ENCODE measurements at regions of chr11 and their contacts with region 1.

Region 1: DNA sequence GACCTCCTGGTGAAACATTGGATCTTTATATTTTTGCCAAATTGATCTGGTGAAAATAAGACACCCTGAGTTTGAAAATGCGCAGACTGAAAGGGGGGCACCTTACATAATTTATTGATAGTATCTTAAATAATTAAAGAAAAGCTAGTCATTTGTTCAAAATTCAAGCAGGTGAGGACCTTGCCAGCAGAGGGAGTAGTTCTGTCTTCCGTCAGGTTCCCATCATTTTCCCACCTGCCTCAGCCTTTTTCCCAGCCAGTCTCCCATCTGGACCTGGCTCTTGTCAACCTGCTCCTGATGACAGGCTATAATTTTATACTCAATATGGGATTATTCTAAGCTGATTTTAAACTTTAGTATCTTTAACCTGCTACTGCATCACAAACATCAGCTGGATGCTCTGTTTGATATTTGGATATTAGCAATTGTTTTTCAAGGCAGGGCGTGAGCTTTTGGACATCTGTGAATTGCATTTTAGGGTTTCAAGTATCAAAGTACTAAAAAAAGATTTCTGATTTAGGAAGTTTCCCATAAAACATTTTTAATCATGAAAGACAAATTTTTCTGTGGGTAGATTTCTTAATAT is 132.0 kb downstream of the ELP4 start:
- DNase-seq: no peak
- H3K4me3 ChIP-seq: no peak overlapping the region
- H3K27ac ChIP-seq: no peak overlapping the region
- H3K27me3 ChIP-seq: no peaks in the 10 kb centered on the region
- CTCF ChIP-seq: peak; percentile 72

Region 2: DNA sequence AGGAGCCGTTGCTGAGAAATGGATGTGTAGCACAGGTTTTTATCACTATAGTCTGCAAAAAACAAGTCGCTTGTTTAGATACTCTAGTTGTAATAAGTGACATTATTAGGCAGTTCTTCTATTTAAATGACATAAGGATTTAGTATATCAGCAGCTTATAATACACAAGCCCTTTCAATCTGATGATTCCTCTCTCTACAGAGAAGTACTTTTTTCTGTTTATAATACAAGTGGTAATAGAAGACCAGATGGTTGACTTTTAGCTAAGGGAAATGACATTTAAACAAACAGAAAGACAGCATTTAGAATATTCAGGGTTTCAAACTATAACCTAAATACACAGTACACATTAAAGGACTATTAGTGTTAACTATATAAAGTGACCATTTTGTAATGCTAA is 192.5 kb before region 1 on chr11:
- CTCF ChIA-PET with region 1: no interaction called
- POLR2A ChIA-PET with region 1: no interaction called
- DNase-seq: no peak
- H3K4me3 ChIP-seq: no peak overlapping the region
- H3K27ac ChIP-seq: no peak overlapping the region
- H3K27me3 ChIP-seq: no peaks in the 10 kb centered on the region
- CTCF ChIP-seq: no peak

Region 3: DNA sequence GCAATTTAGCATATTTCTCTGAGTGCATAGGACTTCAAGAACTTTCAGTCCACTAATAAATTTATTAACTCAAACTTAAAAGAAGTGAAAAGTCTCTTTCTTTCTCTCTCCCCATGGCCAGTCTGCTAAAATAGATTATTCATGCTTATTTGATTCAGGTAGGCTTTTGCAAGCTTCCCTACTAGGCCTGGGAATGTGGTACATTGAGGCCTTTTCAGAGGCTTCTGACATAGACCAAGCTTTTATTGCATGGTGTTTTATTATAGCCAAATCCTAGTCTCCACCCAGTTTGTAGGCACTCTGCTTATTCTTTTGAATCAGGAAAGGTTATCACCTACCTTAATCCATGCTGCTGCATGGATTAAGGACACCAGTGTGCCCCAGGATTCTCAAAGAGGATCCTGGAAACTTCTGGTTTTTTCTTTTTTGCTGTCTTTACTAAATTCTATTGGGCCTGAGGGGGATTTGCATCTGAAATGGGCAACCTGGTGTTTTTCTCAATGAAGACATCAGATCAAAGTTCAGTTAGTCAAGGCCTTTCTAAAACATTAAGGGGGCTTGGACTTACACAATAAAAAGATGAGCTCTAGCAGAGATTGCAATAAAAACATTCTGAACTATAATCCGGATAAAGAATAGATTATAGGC is 39.8 kb before region 1 on chr11:
- CTCF ChIA-PET with region 1: interaction called, 10 read pairs
- POLR2A ChIA-PET with region 1: no interaction called
- DNase-seq: no peak
- H3K4me3 ChIP-seq: no peak overlapping the region
- H3K27ac ChIP-seq: no peak overlapping the region
- H3K27me3 ChIP-seq: no peaks in the 10 kb centered on the region
- CTCF ChIP-seq: no peak

Region 4: GRCh38 chr11:31628111-31628510 is 13.5 kb before region 1 on chr11:
- CTCF ChIA-PET with region 1: interaction called, 18 read pairs
- POLR2A ChIA-PET with region 1: no interaction called
- DNase-seq: no peak
- H3K4me3 ChIP-seq: no peak overlapping the region
- H3K27ac ChIP-seq: no peak overlapping the region
- H3K27me3 ChIP-seq: no peaks in the 10 kb centered on the region
- CTCF ChIP-seq: no peak

Region 5: DNA sequence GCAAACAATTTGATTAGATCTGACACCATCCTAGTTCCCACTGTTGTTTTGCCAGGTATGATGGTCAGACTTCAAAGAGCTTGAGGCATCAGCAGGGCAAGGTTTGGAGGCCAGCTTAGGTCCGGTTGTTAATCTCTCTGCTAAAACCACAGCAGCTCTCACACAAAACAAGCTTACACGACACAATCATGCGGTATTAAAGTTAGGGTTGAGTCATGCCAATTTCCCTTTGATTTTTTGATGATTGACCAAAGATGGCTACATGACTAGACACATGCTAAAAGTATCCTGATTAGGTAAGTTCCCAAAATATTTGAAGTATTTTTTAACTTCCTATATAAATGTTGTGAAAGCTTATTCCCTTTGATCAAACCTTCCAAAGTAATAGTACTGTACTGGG is 13.9 kb after region 1 on chr11:
- CTCF ChIA-PET with region 1: interaction called, 26 read pairs
- POLR2A ChIA-PET with region 1: no interaction called
- DNase-seq: no peak
- H3K4me3 ChIP-seq: no peak overlapping the region
- H3K27ac ChIP-seq: no peak overlapping the region
- H3K27me3 ChIP-seq: no peaks in the 10 kb centered on the region
- CTCF ChIP-seq: no peak

Measured in AG04450 (cell line).